ENCODE measurements at regions of chr3 and their contacts with region 1.

Region 1: DNA sequence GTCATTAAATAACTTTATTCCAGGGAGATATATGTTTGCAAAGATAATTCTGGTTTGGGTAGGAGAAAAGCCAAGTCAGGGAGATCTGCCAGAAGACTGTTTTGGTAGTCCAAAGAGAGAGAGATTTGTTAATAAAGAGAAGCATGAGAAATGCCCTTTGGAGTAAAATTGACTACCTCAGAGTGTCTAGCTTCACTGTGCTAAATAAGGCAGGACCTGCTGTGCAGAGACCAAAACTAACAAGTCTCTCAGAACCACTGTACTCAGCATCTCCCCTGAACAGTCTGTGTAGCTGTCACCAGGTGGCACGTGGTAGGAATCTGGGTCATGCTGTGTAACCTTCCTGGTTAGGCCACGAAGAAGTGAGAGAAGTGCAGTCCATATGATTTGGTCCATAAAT is 31.6 kb upstream of the SLC35G2 start:
- DNase-seq: peak in 1 of 2 donors; percentile 15
- H3K4me3 ChIP-seq: peak overlapping the region; percentile 49 to 50
- H3K27ac ChIP-seq: peak overlapping the region; percentile 63 to 67
- H3K4me1 ChIP-seq: peaks cover 0 to 10% of the 10 kb centered on the region in 2 donors
- H3K27me3 ChIP-seq: no peaks in the 10 kb centered on the region
- CTCF ChIP-seq: no peak

Region 2: GRCh38 chr3:136667081-136667480 is 120.3 kb before region 1 on chr3:
- intact Hi-C with region 1: no loop called
- DNase-seq: no peak
- H3K4me3 ChIP-seq: no peak overlapping the region
- H3K27ac ChIP-seq: no peak overlapping the region
- H3K4me1 ChIP-seq: peaks cover 0 to 7% of the 10 kb centered on the region in 2 donors
- H3K27me3 ChIP-seq: no peaks in the 10 kb centered on the region
- CTCF ChIP-seq: no peak

Region 3: GRCh38 chr3:136802481-136802996 is 15.2 kb after region 1 on chr3:
- intact Hi-C with region 1: loop called (anchors 2 kb)
- DNase-seq: peak in 1 of 2 donors; percentile 74
- H3K4me3 ChIP-seq: peak overlapping the region in 1 of 2 donors; percentile 31
- H3K27ac ChIP-seq: peak overlapping the region; percentile 62 to 79
- H3K4me1 ChIP-seq: peaks cover 0 to 6% of the 10 kb centered on the region in 2 donors
- H3K27me3 ChIP-seq: no peaks in the 10 kb centered on the region
- CTCF ChIP-seq: no peak

Region 4: GRCh38 chr3:136818769-136819391 is 31.5 kb after region 1 on chr3 and contains the start of gene SLC35G2:
- intact Hi-C with region 1: loop called (anchors 2 kb)
- DNase-seq: peak; percentile 10 to 76
- H3K4me3 ChIP-seq: peak within 1 kb of the TSS; percentile 72 to 88
- H3K27ac ChIP-seq: peak within 1 kb of the TSS; percentile 63 to 84
- H3K4me1 ChIP-seq: peaks cover 2 to 6% of the 10 kb centered on the region in 2 donors
- H3K27me3 ChIP-seq: no peaks in the 10 kb centered on the region
- CTCF ChIP-seq: peak in 1 of 3 experiments; percentile 13
- total RNA-seq, gene SLC35G2: 10.0 TPM

Region 5: GRCh38 chr3:137065381-137065780 is 278.0 kb after region 1 on chr3:
- intact Hi-C with region 1: no loop called
- DNase-seq: no peak
- H3K4me3 ChIP-seq: no peak overlapping the region
- H3K27ac ChIP-seq: no peak overlapping the region
- H3K4me1 ChIP-seq: no peaks in the 10 kb centered on the region
- H3K27me3 ChIP-seq: no peaks in the 10 kb centered on the region
- CTCF ChIP-seq: no peak